ENCODE measurements at regions of chr16 and their contacts with region 1.

Region 1: DNA sequence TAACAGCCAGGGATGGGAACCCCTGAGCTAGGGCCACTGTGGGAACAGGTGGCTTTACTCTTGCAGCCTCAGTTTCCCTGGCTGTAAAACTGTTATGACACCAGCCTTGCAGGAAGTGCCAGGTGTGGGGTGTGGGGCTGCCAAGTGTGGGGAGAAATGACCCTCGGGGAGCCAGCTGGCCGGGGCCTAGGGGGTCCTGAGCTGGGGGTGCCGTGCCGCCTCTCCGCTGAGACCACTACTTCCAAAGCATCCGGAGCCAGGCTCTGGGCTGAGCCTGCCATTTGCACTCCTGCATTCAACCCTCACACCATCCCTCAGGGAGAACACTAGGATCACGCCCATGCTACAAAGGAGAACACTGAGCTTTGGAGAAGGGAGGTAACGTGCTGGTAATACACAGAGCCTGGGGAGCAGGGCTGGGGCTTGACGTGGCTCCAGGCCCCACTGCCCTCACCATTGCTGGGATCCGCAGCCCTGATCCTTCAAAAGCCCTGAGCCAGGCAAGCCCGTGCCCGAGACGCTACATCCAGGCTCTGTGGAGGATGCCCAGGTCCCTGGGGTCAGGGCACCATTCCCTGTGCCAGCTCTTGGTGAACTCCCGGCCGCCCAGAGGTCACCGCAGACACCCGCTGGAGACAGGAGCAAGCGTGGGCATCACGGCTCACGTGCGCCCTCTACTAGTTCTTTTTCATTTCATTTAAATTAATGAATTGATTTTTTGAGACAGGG is 28.8 kb upstream of the GINS2 start:
- DNase-seq: peak; percentile 51 to 66
- H3K4me3 ChIP-seq: no peak overlapping the region
- H3K27ac ChIP-seq: no peak overlapping the region
- H3K4me1 ChIP-seq: no peaks in the 10 kb centered on the region
- H3K27me3 ChIP-seq: no peaks in the 10 kb centered on the region
- CTCF ChIP-seq: peak; percentile 58 to 75 (median 70)
- POLR2A ChIP-seq: no peak

Region 2: DNA sequence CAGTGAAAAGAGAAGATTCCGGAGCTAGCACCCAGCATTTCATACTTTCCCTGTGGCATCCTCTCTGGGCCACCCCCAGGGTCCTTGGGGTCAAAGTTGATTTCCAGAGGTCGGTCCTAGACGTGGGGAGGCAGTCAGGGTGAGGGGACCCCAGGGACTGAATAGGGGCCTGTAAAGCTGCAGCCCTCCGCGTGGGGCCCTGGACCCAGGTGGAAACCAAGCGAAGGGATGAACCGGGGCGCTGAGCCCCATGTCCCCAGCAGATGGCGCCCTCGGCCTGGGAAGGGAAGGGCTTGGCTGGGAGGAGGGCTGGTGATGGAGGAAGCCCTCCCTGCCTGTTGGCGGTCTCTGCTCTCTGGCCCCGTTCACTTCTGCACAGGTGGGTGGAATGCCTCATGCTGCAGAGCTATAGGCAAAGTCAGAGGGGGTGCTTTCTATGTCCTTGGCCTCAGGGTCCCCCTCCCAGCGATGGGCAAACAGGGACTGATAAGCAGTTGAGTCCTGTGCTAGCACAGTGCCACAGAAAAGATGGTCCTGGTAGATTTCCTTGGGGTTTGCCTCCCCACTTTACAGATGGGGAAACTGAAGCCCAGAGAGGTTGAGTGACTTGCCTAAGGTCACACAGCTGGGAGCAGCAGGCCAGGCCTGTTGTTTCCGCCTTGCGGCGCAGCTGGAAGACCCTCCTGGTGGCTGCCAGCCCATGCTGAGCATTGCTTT is 441.9 kb before region 1 on chr16:
- intact Hi-C with region 1: loop called (anchors 10 kb)
- DNase-seq: peak; percentile 56 to 73
- H3K4me3 ChIP-seq: no peak overlapping the region
- H3K27ac ChIP-seq: no peak overlapping the region
- H3K4me1 ChIP-seq: no peaks in the 10 kb centered on the region
- H3K27me3 ChIP-seq: no peaks in the 10 kb centered on the region
- CTCF ChIP-seq: peak; percentile 82 to 92 (median 86)
- POLR2A ChIP-seq: peak in 1 of 2 donors; percentile 20

Region 3: DNA sequence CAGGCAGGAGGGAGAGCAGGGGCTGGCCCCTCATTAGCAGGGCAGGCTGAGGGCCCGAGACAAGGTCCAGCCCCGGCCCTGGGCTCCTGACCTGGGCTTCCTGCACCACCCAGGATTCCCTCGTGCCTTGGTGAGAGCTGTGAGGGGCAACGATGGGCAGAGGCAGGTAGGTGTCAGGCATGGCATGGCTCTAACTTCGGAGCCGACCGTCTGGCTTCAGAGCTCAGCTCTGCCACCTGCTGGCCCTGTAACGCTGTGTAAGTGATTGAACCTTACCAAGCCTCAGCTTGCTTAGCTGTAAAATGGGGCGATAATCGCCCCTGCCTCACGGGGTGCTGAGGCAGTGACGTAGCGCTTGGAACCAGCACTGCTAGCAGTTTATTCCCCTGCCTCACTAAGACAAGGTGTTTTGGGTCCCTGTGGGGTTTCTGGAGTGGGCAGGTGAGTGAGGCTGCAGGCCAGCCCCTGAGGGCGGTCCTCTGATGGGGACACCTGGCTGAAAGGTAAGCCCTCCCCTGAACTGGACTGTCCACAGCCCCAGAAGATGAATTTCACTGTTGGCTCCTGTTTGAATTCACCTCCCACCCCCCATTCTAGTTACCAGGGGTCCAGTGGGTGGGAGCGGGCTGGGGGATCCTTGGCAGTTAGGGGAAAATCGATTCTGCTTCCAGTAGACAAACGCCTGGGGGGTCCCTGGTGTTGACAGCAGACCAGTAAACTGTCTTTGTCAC is 289.2 kb before region 1 on chr16:
- intact Hi-C with region 1: no loop called
- DNase-seq: peak in 1 of 2 donors; percentile 33
- H3K4me3 ChIP-seq: no peak overlapping the region
- H3K27ac ChIP-seq: no peak overlapping the region
- H3K4me1 ChIP-seq: no peaks in the 10 kb centered on the region
- H3K27me3 ChIP-seq: no peaks in the 10 kb centered on the region
- CTCF ChIP-seq: peak; percentile 35 to 53 (median 42)
- POLR2A ChIP-seq: no peak

Region 4: GRCh38 chr16:85659805-85660495 is 57.6 kb before region 1 on chr16:
- intact Hi-C with region 1: no loop called
- DNase-seq: peak; percentile 43 to 57
- H3K4me3 ChIP-seq: no peak overlapping the region
- H3K27ac ChIP-seq: no peak overlapping the region
- H3K4me1 ChIP-seq: no peaks in the 10 kb centered on the region
- H3K27me3 ChIP-seq: no peaks in the 10 kb centered on the region
- CTCF ChIP-seq: peak; percentile 50 to 77 (median 66)
- POLR2A ChIP-seq: no peak

Region 5: GRCh38 chr16:86002178-86002900 is 284.8 kb after region 1 on chr16:
- intact Hi-C with region 1: no loop called
- DNase-seq: no peak
- H3K4me3 ChIP-seq: no peak overlapping the region
- H3K27ac ChIP-seq: no peak overlapping the region
- H3K4me1 ChIP-seq: no peaks in the 10 kb centered on the region
- H3K27me3 ChIP-seq: no peaks in the 10 kb centered on the region
- CTCF ChIP-seq: no peak
- POLR2A ChIP-seq: no peak

Region 6: DNA sequence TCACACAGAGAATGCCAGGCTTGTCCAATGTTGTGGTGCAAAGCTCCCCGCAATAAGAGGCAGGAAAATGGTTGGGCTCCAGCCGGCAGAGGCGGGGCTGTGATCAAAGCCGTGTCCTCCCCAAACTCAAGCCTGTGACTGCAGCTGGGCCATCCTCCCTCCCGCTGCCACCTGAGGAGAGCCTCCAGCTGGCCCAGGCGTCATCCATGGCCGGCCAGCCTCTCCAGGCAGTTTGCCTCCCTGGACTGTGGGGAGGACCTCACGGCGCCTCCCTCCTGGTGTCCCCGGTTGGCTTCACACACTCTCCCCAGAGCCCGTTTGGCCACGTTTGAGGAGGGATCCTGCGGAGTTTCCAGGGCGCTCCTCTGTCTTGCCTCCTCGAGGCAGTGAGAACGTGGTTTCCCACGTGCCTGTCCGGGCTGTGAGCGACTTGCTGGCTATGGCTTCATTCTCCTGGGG is 315.5 kb after region 1 on chr16:
- intact Hi-C with region 1: no loop called
- DNase-seq: no peak
- H3K4me3 ChIP-seq: no peak overlapping the region
- H3K27ac ChIP-seq: no peak overlapping the region
- H3K4me1 ChIP-seq: no peaks in the 10 kb centered on the region
- H3K27me3 ChIP-seq: peaks cover 0 to 4% of the 10 kb centered on the region in 2 donors
- CTCF ChIP-seq: no peak
- POLR2A ChIP-seq: no peak

Measured in uterus (tissue), 4 donors.